HepG2 (cell line): ENCODE measurements at regions of chr2 and their contacts with region 1.

Region 1: DNA sequence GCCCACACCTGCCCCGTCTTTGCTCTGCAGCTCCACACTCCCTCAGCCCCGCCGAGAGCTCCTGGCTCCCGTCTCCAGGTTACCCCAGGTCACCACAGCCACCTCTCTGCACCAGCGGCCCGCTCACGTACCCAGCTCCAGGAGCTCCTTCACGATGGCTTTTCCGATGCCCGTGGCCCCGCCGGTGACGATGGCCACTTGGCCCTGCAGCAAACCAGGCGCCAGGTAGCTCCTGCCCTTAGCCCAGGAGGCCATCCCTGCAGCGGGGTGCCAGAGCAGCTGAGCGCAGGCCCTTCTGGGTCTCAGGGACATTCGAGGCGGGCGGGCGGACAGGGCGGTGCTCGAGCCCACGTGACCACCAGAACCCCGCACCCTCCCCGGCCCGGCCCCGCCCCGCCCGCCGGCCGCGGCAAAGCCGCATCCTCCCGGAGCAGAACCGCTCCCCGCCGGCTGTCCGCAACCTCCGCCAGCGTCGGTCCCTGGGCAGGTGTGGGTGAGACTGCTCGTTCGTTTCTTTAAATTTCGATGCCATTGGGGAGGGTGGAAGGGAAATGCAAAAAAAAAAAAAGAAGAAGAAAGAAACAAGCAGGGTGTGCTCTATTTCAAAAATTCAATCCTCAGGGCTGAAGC is at the starts of genes PECR and TMEM169:
- DNase-seq: peak; percentile 81
- ATAC-seq: peak; percentile 93
- H3K4me3 ChIP-seq: peak within 1 kb of the TSS; percentile 85 to 100 (median 99)
- H3K27ac ChIP-seq: peak within 1 kb of the TSS; percentile 88
- H3K4me1 ChIP-seq: peaks cover 83% of the 10 kb centered on the region
- H3K27me3 ChIP-seq: no peaks in the 10 kb centered on the region; a peak in 2 of 5 replicates
- CTCF ChIP-seq: peak; percentile 34
- EP300 ChIP-seq: no peak
- POLR2A ChIP-seq: peak; percentile 93 to 100
- RAD21 ChIP-seq: peak; percentile 60
- total RNA-seq, gene PECR: 151 and 181 TPM in 2 replicates
- total RNA-seq, gene TMEM169: 4.3 and 4.5 TPM in 2 replicates

Region 2: DNA sequence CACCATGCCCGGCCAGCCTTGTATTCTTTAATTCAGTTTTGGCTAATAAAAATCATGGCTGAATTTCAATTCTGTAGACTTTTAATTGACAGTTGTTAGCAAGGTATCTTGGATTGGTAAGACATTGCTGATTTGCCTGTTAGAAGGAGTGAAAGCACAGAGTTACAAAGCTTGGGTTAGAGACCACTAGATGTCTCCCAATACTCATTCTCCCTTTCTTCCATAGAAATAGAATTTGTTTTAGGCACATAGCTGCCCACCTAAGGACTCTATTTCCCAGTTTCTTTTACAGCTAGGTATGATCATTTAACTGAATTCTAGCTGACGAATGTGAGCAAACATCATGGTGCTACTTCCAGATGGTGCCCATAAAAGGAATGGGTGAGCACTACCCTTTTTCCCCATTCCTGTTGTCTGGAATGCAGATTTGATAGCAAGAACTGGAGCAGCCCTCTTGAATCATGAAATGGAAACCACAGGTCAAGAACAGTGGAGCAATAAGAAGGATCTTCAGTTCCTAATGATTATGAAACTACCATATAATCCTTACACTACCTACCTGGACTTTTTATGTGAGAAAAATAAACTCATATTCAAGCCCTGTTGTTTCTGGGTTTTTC is 17.5 kb before region 1 on chr2:
- CTCF ChIA-PET with region 1: no interaction called
- POLR2A ChIA-PET with region 1: interaction called, 13 read pairs
- in situ Hi-C with region 1: no loop called
- intact Hi-C with region 1: no loop called
- DNase-seq: no peak
- ATAC-seq: peak; percentile 45
- H3K4me3 ChIP-seq: no peak overlapping the region
- H3K27ac ChIP-seq: no peak overlapping the region
- H3K4me1 ChIP-seq: peaks cover 32% of the 10 kb centered on the region
- H3K27me3 ChIP-seq: no peaks in the 10 kb centered on the region
- CTCF ChIP-seq: peak; percentile 58
- EP300 ChIP-seq: no peak
- POLR2A ChIP-seq: no peak
- RAD21 ChIP-seq: 0 out of 2 replicates have a peak, but pooled peaks have one; percentile 9

Region 3: GRCh38 chr2:216071111-216071851 is 10.3 kb before region 1 on chr2:
- CTCF ChIA-PET with region 1: no interaction called
- POLR2A ChIA-PET with region 1: interaction called, 13 read pairs
- in situ Hi-C with region 1: no loop called
- intact Hi-C with region 1: no loop called
- DNase-seq: peak; percentile 67
- ATAC-seq: peak; percentile 58
- H3K4me3 ChIP-seq: no peak overlapping the region
- H3K27ac ChIP-seq: peak overlapping the region; percentile 48
- H3K4me1 ChIP-seq: peaks cover 95% of the 10 kb centered on the region
- H3K27me3 ChIP-seq: no peaks in the 10 kb centered on the region
- CTCF ChIP-seq: no peak
- EP300 ChIP-seq: peak in 1 of 2 experiments; percentile 78; a peak in 1 of 4 replicates
- POLR2A ChIP-seq: no peak
- RAD21 ChIP-seq: no peak

Region 4: GRCh38 chr2:216092646-216093045 is 11.0 kb after region 1 on chr2:
- CTCF ChIA-PET with region 1: no interaction called
- POLR2A ChIA-PET with region 1: interaction called, 12 read pairs
- in situ Hi-C with region 1: no loop called
- intact Hi-C with region 1: no loop called
- DNase-seq: no peak
- ATAC-seq: peak; percentile 36; the same call in 1 of the 3 replicates
- H3K4me3 ChIP-seq: no peak overlapping the region
- H3K27ac ChIP-seq: no peak overlapping the region
- H3K4me1 ChIP-seq: peaks cover 6% of the 10 kb centered on the region
- H3K27me3 ChIP-seq: no peaks in the 10 kb centered on the region
- CTCF ChIP-seq: no peak
- EP300 ChIP-seq: no peak
- POLR2A ChIP-seq: no peak
- RAD21 ChIP-seq: no peak

Region 5: GRCh38 chr2:216114714-216115557 is 33.3 kb after region 1 on chr2:
- CTCF ChIA-PET with region 1: interaction called, 3 read pairs
- POLR2A ChIA-PET with region 1: interaction called, 131 read pairs
- in situ Hi-C with region 1: no loop called
- intact Hi-C with region 1: no loop called
- DNase-seq: peak; percentile 100
- ATAC-seq: peak; percentile 90
- H3K4me3 ChIP-seq: peak overlapping the region; percentile 55 to 79 (median 69)
- H3K27ac ChIP-seq: peak overlapping the region; percentile 92
- H3K4me1 ChIP-seq: peaks cover 68% of the 10 kb centered on the region
- H3K27me3 ChIP-seq: no peaks in the 10 kb centered on the region; a peak in 1 of 5 replicates
- CTCF ChIP-seq: peak; percentile 94
- EP300 ChIP-seq: peak in 1 of 2 experiments; percentile 43; a peak in 1 of 4 replicates
- POLR2A ChIP-seq: peak; percentile 57 to 58
- RAD21 ChIP-seq: peak; percentile 12; the same call in 1 of the 2 replicates

Region 6: GRCh38 chr2:216315789-216316603 is 234.4 kb after region 1 on chr2:
- CTCF ChIA-PET with region 1: no interaction called
- POLR2A ChIA-PET with region 1: no interaction called
- in situ Hi-C with region 1: no loop called
- intact Hi-C with region 1: no loop called
- DNase-seq: no peak
- ATAC-seq: peak; percentile 69
- H3K4me3 ChIP-seq: no peak overlapping the region
- H3K27ac ChIP-seq: no peak overlapping the region
- H3K4me1 ChIP-seq: no peaks in the 10 kb centered on the region
- H3K27me3 ChIP-seq: peaks cover 6 to 45% of the 10 kb centered on the region in 2 experiments
- CTCF ChIP-seq: no peak
- EP300 ChIP-seq: no peak
- POLR2A ChIP-seq: no peak
- RAD21 ChIP-seq: no peak